ENCODE measurements at regions of chr18 and their contacts with region 1.

Region 1: GRCh38 chr18:11149441-11150270 is at the start of gene PIEZO2:
- DNase-seq: peak; percentile 68
- ATAC-seq: peak; percentile 89
- H3K4me3 ChIP-seq: peak within 1 kb of the TSS; percentile 57 to 71 (median 64)
- H3K27ac ChIP-seq: no peak within 1 kb of the TSS
- H3K4me1 ChIP-seq: peaks cover 41% of the 10 kb centered on the region
- H3K27me3 ChIP-seq: 0 out of 5 replicates have a peak, but pooled peaks cover 0 to 3% of the 10 kb centered on the region in 2 experiments
- CTCF ChIP-seq: 0 out of 2 replicates have a peak, but pooled peaks have one; percentile 5
- EP300 ChIP-seq: no peak
- POLR2A ChIP-seq: peak in 1 of 2 experiments; percentile 55; a peak in 3 of 4 replicates
- RAD21 ChIP-seq: no peak
- total RNA-seq, gene PIEZO2: 25.5 and 27.2 TPM in 2 replicates

Region 2: DNA sequence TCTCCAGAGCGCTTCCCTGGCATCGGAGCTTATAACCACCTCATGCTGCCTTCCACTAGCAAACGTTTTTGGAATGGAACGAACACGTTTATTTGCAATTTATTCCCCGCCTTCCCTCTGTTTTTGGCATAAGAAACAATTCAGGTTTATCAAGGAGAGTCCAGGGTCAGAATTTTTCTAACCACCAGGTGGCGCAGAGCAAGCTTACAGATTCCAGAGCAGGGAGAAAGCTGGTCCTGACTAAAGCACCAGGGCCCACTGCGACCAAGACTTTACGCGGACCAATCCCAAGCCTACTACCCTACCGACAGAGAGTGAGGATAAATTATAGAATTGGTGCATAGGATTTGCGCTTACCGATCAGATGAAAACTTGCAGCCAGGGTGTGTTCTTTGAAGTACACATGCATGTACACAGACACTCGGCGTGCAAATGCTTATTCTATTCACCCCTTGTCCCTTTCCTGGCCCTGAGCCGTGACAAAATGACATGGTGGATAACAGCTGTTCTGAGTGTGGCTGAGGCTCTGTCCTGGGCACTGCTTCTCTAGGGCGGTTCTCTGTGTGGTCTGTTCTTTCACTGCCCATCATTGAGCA is 589.1 kb before region 1 on chr18:
- CTCF ChIA-PET with region 1: interaction called, 14 read pairs
- POLR2A ChIA-PET with region 1: no interaction called
- in situ Hi-C with region 1: loop called (anchors 5 kb)
- intact Hi-C with region 1: no loop called
- DNase-seq: peak; percentile 63
- ATAC-seq: peak; percentile 79
- H3K4me3 ChIP-seq: no peak overlapping the region
- H3K27ac ChIP-seq: no peak overlapping the region
- H3K4me1 ChIP-seq: no peaks in the 10 kb centered on the region
- H3K27me3 ChIP-seq: no peaks in the 10 kb centered on the region
- CTCF ChIP-seq: peak; percentile 74
- EP300 ChIP-seq: no peak
- POLR2A ChIP-seq: no peak
- RAD21 ChIP-seq: peak; percentile 64; the same call in 1 of the 2 replicates

Region 3: DNA sequence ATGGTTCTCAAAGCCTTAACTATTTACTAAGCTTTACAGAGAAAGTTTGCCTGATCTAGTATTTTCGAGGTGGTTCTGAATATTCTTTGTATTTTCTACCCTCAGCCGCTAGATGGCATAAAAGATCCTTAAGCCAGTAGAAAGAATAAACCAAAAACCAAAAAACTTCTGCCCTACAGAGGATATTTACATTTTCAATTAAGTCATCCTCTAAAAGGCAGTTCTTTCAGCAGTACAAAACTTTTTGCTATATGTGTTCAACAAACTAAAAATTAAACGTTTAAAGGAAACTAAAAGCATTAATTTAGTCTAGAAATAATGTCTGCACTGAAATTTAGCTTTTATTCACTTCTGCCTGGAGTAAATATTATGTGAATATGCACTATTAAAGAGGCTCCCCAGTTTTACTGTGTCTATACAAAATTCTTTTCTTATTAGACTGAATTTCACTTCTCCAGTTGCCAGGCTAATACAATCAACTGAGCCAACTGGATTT is 297.8 kb before region 1 on chr18:
- CTCF ChIA-PET with region 1: interaction called, 34 read pairs
- POLR2A ChIA-PET with region 1: no interaction called
- in situ Hi-C with region 1: loop called (anchors 5 kb)
- intact Hi-C with region 1: loop called (anchors 1 kb)
- DNase-seq: peak; percentile 57
- ATAC-seq: no peak
- H3K4me3 ChIP-seq: no peak overlapping the region
- H3K27ac ChIP-seq: no peak overlapping the region
- H3K4me1 ChIP-seq: peaks cover 28% of the 10 kb centered on the region
- H3K27me3 ChIP-seq: no peaks in the 10 kb centered on the region; a peak in 1 of 5 replicates
- CTCF ChIP-seq: peak; percentile 72
- EP300 ChIP-seq: no peak
- POLR2A ChIP-seq: no peak
- RAD21 ChIP-seq: peak; percentile 83

Region 4: DNA sequence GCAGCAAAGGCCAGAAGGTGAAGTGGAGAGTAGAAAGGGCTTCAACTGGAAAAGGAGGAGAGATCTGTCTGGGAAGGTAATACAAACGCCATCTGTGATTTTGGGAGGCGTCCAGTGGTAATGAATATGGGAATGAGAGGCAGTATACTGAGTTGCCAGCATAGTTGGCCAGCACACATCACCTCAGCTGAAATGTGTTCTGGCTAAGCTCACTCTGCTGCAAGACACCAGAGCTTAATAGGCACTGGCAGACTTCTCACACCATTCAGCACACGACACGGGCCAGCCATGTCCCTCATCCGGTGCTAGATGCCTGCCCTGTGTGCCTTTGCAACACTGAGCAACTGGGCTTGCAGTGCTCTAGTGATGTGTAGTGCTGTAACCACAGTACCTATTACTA is 277.4 kb before region 1 on chr18:
- CTCF ChIA-PET with region 1: no interaction called
- POLR2A ChIA-PET with region 1: no interaction called
- in situ Hi-C with region 1: no loop called
- intact Hi-C with region 1: no loop called
- DNase-seq: no peak
- ATAC-seq: no peak
- H3K4me3 ChIP-seq: no peak overlapping the region
- H3K27ac ChIP-seq: no peak overlapping the region
- H3K4me1 ChIP-seq: peaks cover 26% of the 10 kb centered on the region; the same call in 1 of the 2 replicates
- H3K27me3 ChIP-seq: no peaks in the 10 kb centered on the region
- CTCF ChIP-seq: no peak
- EP300 ChIP-seq: no peak
- POLR2A ChIP-seq: no peak
- RAD21 ChIP-seq: no peak

Region 5: GRCh38 chr18:11114664-11115063 is 35.0 kb before region 1 on chr18:
- CTCF ChIA-PET with region 1: no interaction called
- POLR2A ChIA-PET with region 1: interaction called, 3 read pairs
- in situ Hi-C with region 1: no loop called
- intact Hi-C with region 1: loop called (anchors 5 kb)
- DNase-seq: peak; percentile 68
- ATAC-seq: peak; percentile 31; the same call in 1 of the 3 replicates
- H3K4me3 ChIP-seq: no peak overlapping the region
- H3K27ac ChIP-seq: peak overlapping the region; percentile 21
- H3K4me1 ChIP-seq: peaks cover 66% of the 10 kb centered on the region
- H3K27me3 ChIP-seq: no peaks in the 10 kb centered on the region
- CTCF ChIP-seq: no peak
- EP300 ChIP-seq: peak in 1 of 2 experiments; percentile 45; a peak in 1 of 4 replicates
- POLR2A ChIP-seq: no peak
- RAD21 ChIP-seq: no peak